CD8-positive, alpha-beta T cell (primary cell): ENCODE measurements at regions of chr19 and their contacts with region 1.

Region 1: DNA sequence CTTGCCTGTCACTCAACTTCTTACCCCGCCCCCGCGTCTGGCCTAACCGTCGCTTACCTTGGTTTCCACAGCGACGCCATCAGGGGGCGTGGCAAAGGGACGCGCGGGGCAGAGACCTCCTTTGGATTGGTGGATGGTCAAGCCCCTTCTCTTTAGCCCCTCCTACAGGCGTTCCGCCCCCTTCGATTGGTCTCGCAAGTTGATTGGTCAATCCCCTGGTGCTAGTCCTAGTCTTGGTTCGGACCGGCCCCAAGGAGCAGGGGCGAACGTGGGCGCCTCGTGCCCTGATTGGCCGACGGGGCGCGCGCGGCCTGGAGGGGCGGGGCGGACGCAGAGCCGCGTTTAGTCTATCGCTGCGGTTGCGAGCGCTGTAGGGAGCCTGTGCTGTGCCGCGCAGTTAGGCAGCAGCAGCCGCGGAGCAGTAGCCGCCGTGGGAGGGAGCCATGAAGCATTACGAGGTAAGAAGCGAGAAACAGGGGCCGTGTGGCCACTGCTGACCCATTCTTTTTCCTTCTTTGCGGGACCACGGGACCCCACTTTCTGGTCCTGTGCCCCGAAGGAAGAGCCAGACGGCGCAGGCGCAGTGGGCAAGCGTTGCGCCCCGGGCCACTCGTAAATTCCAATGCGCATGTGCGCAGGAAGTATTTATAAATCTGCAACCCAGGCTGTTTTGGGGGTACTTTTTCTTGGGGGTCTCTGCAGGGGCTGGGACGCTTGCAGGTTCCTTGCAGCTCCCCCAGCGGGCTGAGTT is at the start of gene TECR:
- DNase-seq: peak; percentile 100
- ATAC-seq: peak; percentile 93
- H3K4me3 ChIP-seq: peak within 1 kb of the TSS; percentile 85 to 97
- H3K4me3 Mint-ChIP-seq: peak within 1 kb of the TSS; percentile 97
- H3K27ac ChIP-seq: peak within 1 kb of the TSS; percentile 88 to 89
- H3K27ac Mint-ChIP-seq: peak within 1 kb of the TSS; percentile 98
- H3K4me1 ChIP-seq: peaks cover 28% of the 10 kb centered on the region
- H3K4me1 Mint-ChIP-seq: peaks cover 54% of the 10 kb centered on the region
- H3K27me3 ChIP-seq: no peaks in the 10 kb centered on the region
- H3K27me3 Mint-ChIP-seq: no peaks in the 10 kb centered on the region
- CTCF ChIP-seq: no peak
- total RNA-seq, gene TECR: 300 to 325 TPM

Region 2: GRCh38 chr19:14496028-14496833 is 33.2 kb before region 1 on chr19 and contains the start of gene GIPC1:
- CTCF ChIA-PET with region 1: interaction called, 3 read pairs
- POLR2A ChIA-PET with region 1: interaction called, 3 read pairs
- intact Hi-C with region 1: loop called (anchors 1 to 2 kb)
- DNase-seq: peak; percentile 53 to 89 (median 80)
- ATAC-seq: peak; percentile 86
- H3K4me3 ChIP-seq: peak within 1 kb of the TSS; percentile 62 to 97
- H3K4me3 Mint-ChIP-seq: peak within 1 kb of the TSS; percentile 81
- H3K27ac ChIP-seq: peak within 1 kb of the TSS; percentile 42 to 58
- H3K27ac Mint-ChIP-seq: peak within 1 kb of the TSS; percentile 90
- H3K4me1 ChIP-seq: peaks cover 19% of the 10 kb centered on the region
- H3K4me1 Mint-ChIP-seq: peaks cover 24% of the 10 kb centered on the region
- H3K27me3 ChIP-seq: no peaks in the 10 kb centered on the region
- H3K27me3 Mint-ChIP-seq: no peaks in the 10 kb centered on the region
- CTCF ChIP-seq: no peak
- total RNA-seq, gene GIPC1: 15.6 to 16.0 TPM

Region 3: DNA sequence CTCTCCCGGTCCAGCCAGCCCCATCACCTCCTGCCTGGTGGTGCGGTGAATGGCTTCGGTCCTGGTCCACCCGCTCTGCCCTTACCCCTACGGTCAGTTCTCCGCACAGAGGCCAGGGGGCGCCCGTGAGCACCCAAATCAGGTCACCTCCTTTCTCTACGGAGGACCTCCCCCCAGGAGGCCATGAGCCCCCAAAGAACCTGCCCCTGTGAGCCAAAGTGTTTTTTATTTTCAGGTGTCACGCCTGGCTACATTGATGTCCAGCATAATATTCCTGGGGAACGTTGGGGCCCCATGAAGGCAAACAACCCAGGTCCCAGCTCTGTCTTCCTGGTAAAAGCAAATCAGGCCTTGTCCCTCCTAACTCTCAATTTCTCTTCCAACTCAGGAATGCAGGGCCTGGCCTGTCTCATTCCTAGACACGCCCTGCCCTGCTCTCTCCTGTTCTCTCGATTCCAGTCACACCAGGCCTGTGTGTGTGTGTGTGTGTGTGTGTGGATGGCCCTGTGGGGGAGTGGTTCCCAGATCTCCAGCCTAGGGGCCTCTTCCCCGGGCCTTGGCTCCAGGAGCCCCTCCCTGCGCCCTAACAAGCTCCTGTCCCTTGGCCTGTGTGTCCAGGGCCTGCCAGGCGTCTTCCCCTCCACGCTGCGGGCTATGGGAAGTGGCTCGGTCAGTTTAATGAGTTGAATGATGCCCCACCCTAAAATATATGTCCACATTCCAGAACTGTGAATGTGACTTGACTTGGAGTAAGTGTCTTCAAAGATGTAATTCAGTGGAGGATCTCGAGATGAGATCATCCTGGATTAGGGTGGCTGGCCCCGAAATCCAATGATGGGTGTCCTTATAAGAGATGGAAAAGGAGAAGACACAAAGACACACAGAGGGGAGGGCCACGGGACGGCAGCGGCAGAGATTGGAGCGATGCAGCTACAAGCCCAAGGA is 23.7 kb before region 1 on chr19:
- CTCF ChIA-PET with region 1: interaction called, 5 read pairs
- POLR2A ChIA-PET with region 1: interaction called, 43 read pairs
- intact Hi-C with region 1: loop called (anchors 1 kb)
- DNase-seq: peak; percentile 50 to 87 (median 76)
- ATAC-seq: peak; percentile 51
- H3K4me3 ChIP-seq: peak overlapping the region in 1 of 2 experiments; percentile 25
- H3K4me3 Mint-ChIP-seq: peak overlapping the region; percentile 56
- H3K27ac ChIP-seq: peak overlapping the region; percentile 62 to 76
- H3K27ac Mint-ChIP-seq: peak overlapping the region; percentile 96
- H3K4me1 ChIP-seq: peaks cover 49% of the 10 kb centered on the region
- H3K4me1 Mint-ChIP-seq: peaks cover 64% of the 10 kb centered on the region
- H3K27me3 ChIP-seq: no peaks in the 10 kb centered on the region
- H3K27me3 Mint-ChIP-seq: no peaks in the 10 kb centered on the region
- CTCF ChIP-seq: peak; percentile 82

Region 4: DNA sequence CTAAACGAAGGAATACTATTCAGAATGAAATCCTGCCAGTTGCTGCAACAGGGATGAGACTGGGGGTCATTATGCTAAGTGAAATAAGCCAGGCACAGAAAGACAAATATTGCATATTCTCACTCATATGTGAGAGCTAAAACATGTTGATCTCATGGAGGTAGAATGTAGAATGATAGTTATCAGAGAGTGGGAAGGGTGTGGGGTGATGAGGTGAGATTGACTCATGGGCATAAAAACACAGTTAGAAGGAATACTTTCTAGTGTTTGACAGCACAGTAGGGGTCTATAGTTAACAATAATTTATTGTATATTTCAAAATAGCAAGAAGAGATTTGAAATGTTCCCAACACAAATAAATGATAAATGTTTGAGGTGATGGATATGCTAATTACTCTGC is 404.1 kb after region 1 on chr19:
- CTCF ChIA-PET with region 1: no interaction called
- POLR2A ChIA-PET with region 1: no interaction called
- intact Hi-C with region 1: no loop called
- DNase-seq: no peak
- ATAC-seq: no peak
- H3K4me3 ChIP-seq: no peak overlapping the region
- H3K4me3 Mint-ChIP-seq: no peak overlapping the region
- H3K27ac ChIP-seq: no peak overlapping the region
- H3K27ac Mint-ChIP-seq: no peak overlapping the region
- H3K4me1 ChIP-seq: no peaks in the 10 kb centered on the region
- H3K4me1 Mint-ChIP-seq: no peaks in the 10 kb centered on the region
- H3K27me3 ChIP-seq: no peaks in the 10 kb centered on the region
- H3K27me3 Mint-ChIP-seq: peaks cover 27% of the 10 kb centered on the region
- CTCF ChIP-seq: no peak